Ascending aorta (tissue), 2 donors: ENCODE measurements at regions of chr3 and their contacts with region 1.

Region 1: GRCh38 chr3:71495708-71496472 is 87.6 kb downstream of the FOXP1 start:
- DNase-seq: no peak
- H3K4me3 ChIP-seq: peak overlapping the region; percentile 22 to 49
- H3K27ac ChIP-seq: peak overlapping the region; percentile 81 to 85
- H3K4me1 ChIP-seq: peaks cover 10 to 25% of the 10 kb centered on the region in 2 donors
- H3K27me3 ChIP-seq: no peaks in the 10 kb centered on the region
- CTCF ChIP-seq: no peak

Region 2: GRCh38 chr3:71428841-71429596 is 66.9 kb before region 1 on chr3:
- intact Hi-C with region 1: no loop called
- DNase-seq: peak in 1 of 2 donors; percentile 66
- H3K4me3 ChIP-seq: peak overlapping the region in 1 of 2 donors; percentile 55
- H3K27ac ChIP-seq: no peak overlapping the region
- H3K4me1 ChIP-seq: peaks cover 9 to 26% of the 10 kb centered on the region in 2 donors
- H3K27me3 ChIP-seq: no peaks in the 10 kb centered on the region
- CTCF ChIP-seq: no peak

Region 3: DNA sequence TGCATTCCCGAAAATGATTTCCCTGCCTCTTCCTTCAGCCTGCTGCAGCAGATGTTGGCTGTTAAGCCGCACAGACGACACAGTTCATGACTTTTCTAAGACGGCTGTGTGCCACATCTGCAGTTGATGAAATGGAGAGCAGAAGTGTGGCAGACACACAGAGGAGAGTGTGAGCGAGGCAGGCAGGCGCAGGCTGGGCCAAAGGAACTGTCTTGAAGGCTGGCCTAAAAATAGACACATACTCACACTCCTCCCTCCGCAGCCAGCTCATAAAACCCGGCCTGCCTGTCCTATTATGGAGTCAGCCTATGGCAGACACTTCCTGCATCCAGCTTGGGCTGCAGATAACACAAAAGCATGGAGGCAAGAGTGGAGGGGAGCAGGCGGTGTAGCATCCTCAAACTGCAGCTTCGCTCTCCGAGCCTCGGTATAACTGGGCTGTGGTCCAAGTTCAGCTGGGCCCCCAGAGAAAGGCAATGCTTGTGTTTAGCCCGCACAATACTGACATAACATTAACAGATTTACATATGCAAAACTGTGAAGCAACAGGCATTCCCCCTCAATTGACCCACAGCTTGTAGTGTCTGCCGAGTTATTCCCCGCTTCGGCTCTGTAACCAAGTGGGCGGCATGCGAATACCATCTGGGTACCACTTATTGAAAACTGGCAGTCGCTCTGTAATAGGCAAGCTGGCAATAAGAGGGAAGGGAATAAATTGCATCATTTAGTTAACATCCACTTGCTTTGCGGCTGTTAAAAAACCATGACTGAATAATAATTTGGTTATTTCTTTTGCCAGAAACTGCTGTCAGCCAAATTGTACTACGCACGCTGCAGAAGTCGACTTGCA is 46.9 kb after region 1 on chr3:
- intact Hi-C with region 1: loop called (anchors 2 kb)
- DNase-seq: peak; percentile 63 to 92
- H3K4me3 ChIP-seq: peak overlapping the region; percentile 20 to 56
- H3K27ac ChIP-seq: peak overlapping the region; percentile 75 to 80
- H3K4me1 ChIP-seq: peaks cover 0 to 30% of the 10 kb centered on the region in 2 donors
- H3K27me3 ChIP-seq: no peaks in the 10 kb centered on the region
- CTCF ChIP-seq: no peak

Region 4: DNA sequence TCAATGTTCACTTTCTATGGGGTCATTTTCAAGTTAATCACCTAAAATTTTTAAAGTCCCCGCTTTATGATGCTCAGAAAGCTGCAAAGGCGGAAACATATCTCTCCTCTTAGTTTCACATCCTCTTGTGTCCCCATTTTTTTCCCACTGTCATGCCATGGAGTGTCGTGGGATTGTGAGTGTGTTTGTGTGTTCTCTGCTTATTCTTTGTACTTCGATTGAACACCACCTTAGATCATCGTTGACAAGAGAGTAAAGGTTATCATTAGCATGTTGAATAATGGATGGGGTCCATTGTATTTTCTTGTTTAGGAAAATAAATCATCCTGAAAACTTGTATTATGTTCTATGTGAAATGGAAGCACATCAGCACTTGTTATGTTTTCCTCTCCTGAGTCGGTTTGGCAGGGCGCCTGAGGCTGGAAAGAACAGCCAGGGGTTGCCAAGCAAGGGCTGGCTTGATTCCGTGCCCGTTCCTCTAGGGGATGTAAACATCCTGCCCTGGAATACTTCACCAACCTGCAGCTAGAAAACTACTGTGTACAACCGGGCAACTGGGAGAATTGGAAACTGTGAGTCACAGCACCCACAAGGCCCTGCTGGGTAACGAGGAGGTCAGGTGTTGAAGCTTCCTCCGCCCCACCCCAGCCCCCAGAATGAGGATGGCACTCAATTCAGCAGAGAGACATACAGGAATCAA is 162.1 kb after region 1 on chr3:
- intact Hi-C with region 1: no loop called
- DNase-seq: peak; percentile 64 to 94
- H3K4me3 ChIP-seq: peak overlapping the region; percentile 0 to 9
- H3K27ac ChIP-seq: peak overlapping the region; percentile 36 to 59
- H3K4me1 ChIP-seq: peaks cover 0 to 9% of the 10 kb centered on the region in 2 donors
- H3K27me3 ChIP-seq: no peaks in the 10 kb centered on the region
- CTCF ChIP-seq: no peak